ENCODE measurements at regions of chr17 and their contacts with region 1.

Region 1: GRCh38 chr17:35879773-35880654 is at the start of gene CCL5:
- DNase-seq: no peak
- ATAC-seq: peak; percentile 44
- H3K4me3 ChIP-seq: no peak within 1 kb of the TSS
- H3K27ac ChIP-seq: no peak within 1 kb of the TSS
- H3K4me1 ChIP-seq: no peaks in the 10 kb centered on the region
- H3K27me3 ChIP-seq: no peaks in the 10 kb centered on the region
- CTCF ChIP-seq: no peak
- total RNA-seq, gene CCL5: 15.9 TPM

Region 2: GRCh38 chr17:35895636-35896532 is 15.9 kb after region 1 on chr17:
- CTCF ChIA-PET with region 1: interaction called, 10 read pairs
- POLR2A ChIA-PET with region 1: no interaction called
- in situ Hi-C with region 1: no loop called
- intact Hi-C with region 1: no loop called
- DNase-seq: no peak
- ATAC-seq: no peak
- H3K4me3 ChIP-seq: no peak overlapping the region
- H3K27ac ChIP-seq: no peak overlapping the region
- H3K4me1 ChIP-seq: no peaks in the 10 kb centered on the region
- H3K27me3 ChIP-seq: no peaks in the 10 kb centered on the region
- CTCF ChIP-seq: no peak

Region 3: GRCh38 chr17:35901651-35902175 is 21.7 kb after region 1 on chr17:
- CTCF ChIA-PET with region 1: no interaction called
- POLR2A ChIA-PET with region 1: interaction called, 14 read pairs
- in situ Hi-C with region 1: no loop called
- intact Hi-C with region 1: no loop called
- DNase-seq: no peak
- ATAC-seq: no peak
- H3K4me3 ChIP-seq: no peak overlapping the region
- H3K27ac ChIP-seq: no peak overlapping the region
- H3K4me1 ChIP-seq: no peaks in the 10 kb centered on the region
- H3K27me3 ChIP-seq: no peaks in the 10 kb centered on the region
- CTCF ChIP-seq: no peak